GM18951 (cell line): ENCODE measurements at regions of chr4 and their contacts with region 1.

Region 1: DNA sequence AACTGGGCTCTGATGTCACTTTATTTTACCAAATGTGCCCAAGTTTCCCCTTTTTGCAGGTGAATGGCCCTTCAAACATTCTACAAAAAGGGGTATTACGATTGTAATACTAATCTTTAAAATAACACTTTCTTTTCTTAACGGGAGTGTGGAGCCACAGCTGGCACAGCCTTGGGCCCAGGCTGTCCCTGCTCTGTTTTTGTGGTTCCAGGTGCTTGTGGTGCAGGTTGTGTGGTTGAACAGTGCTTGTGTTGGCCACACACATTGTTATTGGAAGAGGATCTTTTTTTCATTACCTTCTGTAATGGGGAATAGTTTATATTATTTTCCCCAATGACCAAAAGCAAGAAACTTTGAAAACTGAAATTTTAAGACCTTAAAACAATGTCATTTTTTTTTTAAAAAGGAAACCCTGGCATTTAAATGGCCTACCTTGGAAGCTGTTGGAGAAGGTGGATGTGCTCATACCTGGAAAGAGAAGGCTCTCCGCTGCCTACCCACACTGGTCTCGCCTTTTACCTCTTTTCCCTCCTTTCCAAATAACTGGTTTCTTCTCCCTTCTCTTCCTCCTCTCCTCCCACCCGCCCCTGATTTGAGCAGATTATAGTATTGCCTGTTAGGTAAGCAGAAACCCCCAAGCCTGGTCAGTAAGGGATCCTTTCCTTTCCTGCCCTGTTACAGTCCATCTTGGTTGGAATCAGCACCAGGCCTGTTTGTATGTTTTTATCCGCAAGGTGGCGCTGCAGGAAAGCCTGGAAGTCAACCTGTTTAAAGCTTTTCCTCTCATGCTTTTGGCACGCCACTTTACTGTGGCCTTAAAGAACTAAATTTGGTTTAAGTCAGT is 28.6 kb downstream of the HADH start:
- POLR2A ChIP-seq: no peak

Region 2: DNA sequence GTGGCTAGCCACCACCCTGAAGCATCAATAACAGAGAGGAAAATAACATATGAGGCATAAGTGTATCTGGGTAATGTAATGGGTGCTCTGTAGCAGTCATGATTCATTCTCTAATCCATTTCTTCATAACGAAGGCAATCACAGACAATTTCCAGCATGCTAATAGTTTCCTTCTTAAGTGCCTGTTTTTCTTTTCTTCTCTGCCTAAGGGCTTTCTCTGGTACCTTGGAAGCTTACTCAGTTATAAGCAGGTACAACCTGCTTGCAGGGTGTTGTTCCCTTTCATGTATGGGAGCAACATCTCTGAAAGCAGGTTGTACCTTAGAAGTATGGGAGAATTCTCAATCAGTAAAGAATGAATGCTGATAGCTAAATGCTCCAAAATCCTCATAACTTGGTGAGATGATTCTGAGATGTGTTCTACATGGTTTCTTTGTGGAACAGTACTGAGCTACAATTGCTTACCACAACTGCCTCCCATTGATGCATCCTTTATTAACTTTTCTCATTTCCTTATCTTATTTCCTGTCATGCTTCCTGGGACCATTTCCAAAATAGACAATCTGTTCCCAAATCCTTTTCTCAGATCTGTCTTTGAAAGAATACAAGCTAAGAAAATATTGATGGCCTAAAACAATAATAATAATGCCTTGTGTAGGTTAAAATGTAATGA is 545.9 kb before region 1 on chr4:
- in situ Hi-C with region 1: no loop called
- POLR2A ChIP-seq: no peak

Region 3: GRCh38 chr4:108570993-108571569 is 552.8 kb after region 1 on chr4:
- in situ Hi-C with region 1: loop called (anchors 5 kb)
- POLR2A ChIP-seq: no peak